ENCODE measurements at regions of chr4 and their contacts with region 1.

Region 1: GRCh38 chr4:113106108-113106507 is 56.7 kb downstream of the ANK2 start:
- DNase-seq: peak; percentile 32
- H3K4me3 Mint-ChIP-seq: no peak overlapping the region
- H3K27ac Mint-ChIP-seq: no peak overlapping the region
- H3K4me1 Mint-ChIP-seq: no peaks in the 10 kb centered on the region
- H3K27me3 Mint-ChIP-seq: no peaks in the 10 kb centered on the region
- CTCF ChIP-seq: peak; percentile 44

Region 2: GRCh38 chr4:113153529-113154101 is 47.5 kb after region 1 on chr4:
- CTCF ChIA-PET with region 1: interaction called, 3 read pairs
- POLR2A ChIA-PET with region 1: interaction called, 3 read pairs
- intact Hi-C with region 1: loop called (anchors 2 kb)
- DNase-seq: peak; percentile 70
- H3K4me3 Mint-ChIP-seq: no peak overlapping the region
- H3K27ac Mint-ChIP-seq: no peak overlapping the region
- H3K4me1 Mint-ChIP-seq: no peaks in the 10 kb centered on the region
- H3K27me3 Mint-ChIP-seq: no peaks in the 10 kb centered on the region
- CTCF ChIP-seq: no peak

Region 3: DNA sequence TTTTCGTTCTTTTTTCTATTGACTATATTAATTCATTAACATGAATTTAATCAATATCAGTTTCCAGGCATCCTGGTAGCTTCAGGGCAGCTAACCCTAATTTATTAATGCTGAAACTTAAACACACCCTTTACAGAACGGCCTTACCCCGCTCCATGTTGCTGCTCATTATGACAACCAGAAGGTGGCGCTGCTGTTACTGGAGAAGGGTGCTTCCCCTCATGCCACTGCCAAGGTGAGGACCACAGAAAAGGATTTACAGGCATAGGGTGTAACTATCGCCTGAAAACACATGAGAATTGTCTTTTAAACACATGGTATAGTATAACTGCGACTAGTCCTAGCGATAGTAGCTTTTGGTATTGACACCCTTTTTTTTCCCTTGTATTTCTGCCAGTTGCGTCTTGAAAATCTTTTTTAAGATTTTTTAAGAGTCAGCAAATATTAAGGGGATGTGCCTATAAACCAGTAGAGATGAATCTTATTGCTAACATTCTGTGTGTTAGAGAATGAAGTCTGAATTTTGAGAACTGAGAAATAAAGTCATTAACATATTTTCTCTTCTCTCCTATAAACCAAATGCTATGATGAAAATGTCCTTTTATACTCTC is 172.3 kb after region 1 on chr4:
- CTCF ChIA-PET with region 1: interaction called, 5 read pairs
- POLR2A ChIA-PET with region 1: no interaction called
- intact Hi-C with region 1: loop called (anchors 10 kb)
- DNase-seq: peak; percentile 90
- H3K4me3 Mint-ChIP-seq: no peak overlapping the region
- H3K27ac Mint-ChIP-seq: no peak overlapping the region
- H3K4me1 Mint-ChIP-seq: no peaks in the 10 kb centered on the region
- H3K27me3 Mint-ChIP-seq: no peaks in the 10 kb centered on the region
- CTCF ChIP-seq: peak; percentile 80

Measured in MCF 10A (cell line).